Colonic mucosa (tissue), 4 donors: ENCODE measurements at regions of chr10 and their contacts with region 1.

Region 1: DNA sequence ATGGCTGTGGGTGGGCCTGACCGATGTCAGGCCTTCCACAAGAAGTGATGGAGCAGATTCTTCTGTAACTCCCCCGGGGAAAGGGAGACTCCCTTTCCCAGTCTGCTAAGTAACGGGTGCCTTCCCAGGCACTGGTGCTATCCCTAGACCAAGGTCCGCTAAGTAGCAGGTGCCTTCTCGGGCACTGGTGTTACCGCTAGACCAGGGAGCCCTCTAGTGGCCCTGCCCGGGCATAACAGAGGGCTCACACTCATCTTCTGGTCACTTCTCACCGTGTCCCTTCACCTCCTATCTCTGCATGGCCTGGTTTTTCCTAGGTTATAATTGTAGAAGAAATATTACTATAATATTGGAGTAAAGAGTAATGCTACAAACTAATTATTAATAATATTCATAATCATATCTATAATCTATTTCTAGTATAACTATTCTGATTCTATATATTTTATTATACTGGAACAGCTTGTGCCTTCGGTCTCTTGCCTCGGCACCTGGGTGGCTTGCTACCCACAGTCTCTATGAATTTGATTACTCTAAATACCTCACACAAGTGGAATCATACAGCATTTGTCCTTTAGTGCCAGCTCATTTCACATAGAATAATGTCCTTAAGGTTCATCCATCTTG is 1378.7 kb downstream of the XPNPEP1 start:
- DNase-seq: peak; percentile 66
- H3K4me3 ChIP-seq: no peak overlapping the region
- H3K27ac ChIP-seq: no peak overlapping the region
- H3K4me1 ChIP-seq: no peaks in the 10 kb centered on the region
- H3K27me3 ChIP-seq: no peaks in the 10 kb centered on the region
- CTCF ChIP-seq: peak; percentile 77

Region 2: GRCh38 chr10:106625751-106626150 is 1918.9 kb before region 1 on chr10:
- intact Hi-C with region 1: loop called (anchors 10 kb)
- DNase-seq: no peak
- H3K4me3 ChIP-seq: no peak overlapping the region
- H3K27ac ChIP-seq: no peak overlapping the region
- H3K4me1 ChIP-seq: no peaks in the 10 kb centered on the region
- H3K27me3 ChIP-seq: no peaks in the 10 kb centered on the region
- CTCF ChIP-seq: no peak